K562 (cell line): ENCODE measurements at regions of chr16 and their contacts with region 1.

Region 1: DNA sequence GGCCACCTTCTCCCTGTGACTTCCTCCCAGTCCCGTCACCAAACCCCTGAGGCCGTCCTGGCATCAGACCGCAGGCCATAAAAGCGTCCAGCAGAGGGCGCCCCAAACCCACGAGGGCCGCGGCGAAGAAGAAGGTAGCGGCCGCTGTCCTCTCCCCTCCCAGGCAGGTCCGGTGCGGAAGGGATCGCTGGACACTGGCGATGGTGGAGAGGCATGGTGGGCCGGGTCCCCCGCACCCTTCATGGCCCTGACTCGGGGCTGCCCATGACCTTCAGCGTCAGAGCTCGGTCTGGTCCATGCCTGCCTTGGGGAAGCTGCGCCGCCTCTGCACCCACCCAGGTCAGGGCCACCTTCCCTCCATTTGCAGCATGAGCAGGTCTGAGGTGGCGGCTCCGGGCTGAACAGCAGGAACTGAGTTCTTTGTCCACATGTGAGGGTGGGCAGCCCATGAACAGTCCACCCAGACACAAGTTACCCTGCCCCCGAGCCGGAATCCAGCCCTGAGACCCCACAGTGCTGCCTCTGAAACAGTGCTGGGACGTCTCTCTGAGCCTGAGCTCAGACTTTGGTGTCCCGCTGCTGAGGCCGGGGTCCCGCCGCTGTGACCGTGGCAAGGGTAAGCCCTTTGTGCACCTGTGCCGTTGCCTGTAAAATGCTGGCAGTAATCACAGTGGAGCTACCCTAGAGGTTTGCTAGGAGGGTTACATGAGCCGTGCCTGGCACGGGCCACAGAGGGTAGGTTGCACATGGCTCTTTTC is 40.8 kb upstream of the CMIP start:
- DNase-seq: peak; percentile 93 to 94 (median 94)
- ATAC-seq: peak; percentile 99
- H3K4me3 ChIP-seq: peak overlapping the region; percentile 31
- H3K27ac ChIP-seq: no peak overlapping the region
- H3K4me1 ChIP-seq: peaks cover 6 to 9% of the 10 kb centered on the region in 2 experiments; a peak in 4 of 5 replicates
- H3K27me3 ChIP-seq: peaks cover 3 to 19% of the 10 kb centered on the region in 2 experiments; a peak in 4 of 5 replicates
- CTCF ChIP-seq: peak; percentile 96 to 98 (median 98)
- EP300 ChIP-seq: no peak
- POLR2A ChIP-seq: no peak
- RAD21 ChIP-seq: peak; percentile 99 to 100

Region 2: GRCh38 chr16:80230328-80231120 is 1173.3 kb before region 1 on chr16:
- CTCF ChIA-PET with region 1: no interaction called
- POLR2A ChIA-PET with region 1: no interaction called
- in situ Hi-C with region 1: no loop called
- intact Hi-C with region 1: no loop called
- DNase-seq: no peak
- ATAC-seq: no peak
- H3K4me3 ChIP-seq: no peak overlapping the region
- H3K27ac ChIP-seq: no peak overlapping the region
- H3K4me1 ChIP-seq: no peaks in the 10 kb centered on the region
- H3K27me3 ChIP-seq: no peaks in the 10 kb centered on the region
- CTCF ChIP-seq: no peak
- EP300 ChIP-seq: no peak
- POLR2A ChIP-seq: no peak
- RAD21 ChIP-seq: no peak

Region 3: GRCh38 chr16:81174654-81175571 is 228.9 kb before region 1 on chr16:
- CTCF ChIA-PET with region 1: no interaction called
- POLR2A ChIA-PET with region 1: interaction called, 11 read pairs
- in situ Hi-C with region 1: no loop called
- intact Hi-C with region 1: no loop called
- DNase-seq: no peak
- ATAC-seq: peak; percentile 44
- H3K4me3 ChIP-seq: no peak overlapping the region
- H3K27ac ChIP-seq: no peak overlapping the region
- H3K4me1 ChIP-seq: no peaks in the 10 kb centered on the region
- H3K27me3 ChIP-seq: peaks cover 29 to 90% of the 10 kb centered on the region in 2 experiments
- CTCF ChIP-seq: no peak
- EP300 ChIP-seq: no peak
- POLR2A ChIP-seq: no peak
- RAD21 ChIP-seq: no peak

Region 4: GRCh38 chr16:81293909-81294823 is 109.6 kb before region 1 on chr16:
- CTCF ChIA-PET with region 1: no interaction called
- POLR2A ChIA-PET with region 1: no interaction called
- in situ Hi-C with region 1: no loop called
- intact Hi-C with region 1: no loop called
- DNase-seq: no peak
- ATAC-seq: no peak
- H3K4me3 ChIP-seq: no peak overlapping the region
- H3K27ac ChIP-seq: no peak overlapping the region
- H3K4me1 ChIP-seq: no peaks in the 10 kb centered on the region
- H3K27me3 ChIP-seq: peaks cover 47 to 75% of the 10 kb centered on the region in 2 experiments
- CTCF ChIP-seq: no peak
- EP300 ChIP-seq: no peak
- POLR2A ChIP-seq: no peak
- RAD21 ChIP-seq: no peak

Region 5: GRCh38 chr16:81537721-81538561 is 134.1 kb after region 1 on chr16:
- CTCF ChIA-PET with region 1: interaction called, 4 read pairs
- POLR2A ChIA-PET with region 1: no interaction called
- in situ Hi-C with region 1: no loop called
- intact Hi-C with region 1: loop called (anchors 5 kb)
- DNase-seq: peak in 1 of 4 experiments; percentile 47
- ATAC-seq: peak; percentile 75
- H3K4me3 ChIP-seq: no peak overlapping the region
- H3K27ac ChIP-seq: no peak overlapping the region
- H3K4me1 ChIP-seq: peaks cover 0 to 15% of the 10 kb centered on the region in 2 experiments; a peak in 3 of 5 replicates
- H3K27me3 ChIP-seq: no peaks in the 10 kb centered on the region
- CTCF ChIP-seq: peak; percentile 16 to 49 (median 44); a peak in 3 of 6 replicates
- EP300 ChIP-seq: no peak
- POLR2A ChIP-seq: no peak
- RAD21 ChIP-seq: peak; percentile 26 to 49; a peak in 3 of 4 replicates

Region 6: GRCh38 chr16:81564421-81564911 is 160.7 kb after region 1 on chr16:
- CTCF ChIA-PET with region 1: no interaction called
- POLR2A ChIA-PET with region 1: no interaction called
- in situ Hi-C with region 1: no loop called
- intact Hi-C with region 1: no loop called
- DNase-seq: no peak
- ATAC-seq: no peak
- H3K4me3 ChIP-seq: no peak overlapping the region
- H3K27ac ChIP-seq: no peak overlapping the region
- H3K4me1 ChIP-seq: peaks cover under 1 to 3% of the 10 kb centered on the region in 2 experiments; a peak in 1 of 5 replicates
- H3K27me3 ChIP-seq: no peaks in the 10 kb centered on the region
- CTCF ChIP-seq: no peak
- EP300 ChIP-seq: no peak
- POLR2A ChIP-seq: no peak
- RAD21 ChIP-seq: no peak

Region 7: DNA sequence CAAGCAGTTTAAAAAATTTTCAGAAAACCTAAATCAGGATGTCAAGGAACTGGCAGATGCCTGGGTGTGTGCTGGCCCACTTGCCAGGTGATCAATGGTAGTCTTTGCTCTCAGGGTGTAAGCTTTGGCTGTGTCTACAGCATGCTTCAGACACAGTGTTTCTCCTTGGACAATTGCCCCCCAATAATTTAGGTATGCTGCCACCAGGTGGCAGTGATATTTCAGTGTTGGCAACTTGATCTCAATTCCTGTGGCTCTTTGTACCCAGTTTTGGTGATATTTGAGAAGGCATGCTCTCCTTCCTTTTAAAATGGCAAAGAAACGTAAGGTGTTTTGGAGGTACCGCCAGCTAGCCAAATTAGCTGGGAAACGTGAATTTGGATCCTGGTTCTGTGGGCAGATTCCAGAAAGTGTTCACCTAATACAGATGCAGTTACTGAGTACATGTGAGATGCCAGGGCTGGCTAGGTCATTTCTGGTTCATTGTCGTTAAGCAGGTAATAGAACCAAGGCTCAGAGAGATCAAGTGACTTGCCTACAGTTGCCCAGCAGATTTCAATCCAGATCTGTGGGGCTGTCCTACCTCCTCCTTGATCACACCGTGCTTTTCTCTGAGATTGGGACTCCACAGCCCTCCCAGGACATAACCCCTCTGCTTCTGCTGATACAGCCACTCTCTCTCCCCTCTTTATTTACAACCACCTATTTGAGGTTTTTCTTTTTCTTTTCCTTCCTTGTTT is 219.7 kb after region 1 on chr16:
- CTCF ChIA-PET with region 1: interaction called, 4 read pairs
- POLR2A ChIA-PET with region 1: no interaction called
- in situ Hi-C with region 1: no loop called
- intact Hi-C with region 1: loop called (anchors 1 kb)
- DNase-seq: peak; percentile 51 to 81 (median 61)
- ATAC-seq: peak; percentile 32
- H3K4me3 ChIP-seq: no peak overlapping the region
- H3K27ac ChIP-seq: peak overlapping the region; percentile 3; the same call in 1 of the 3 replicates
- H3K4me1 ChIP-seq: peaks cover 35% of the 10 kb centered on the region in 2 experiments
- H3K27me3 ChIP-seq: no peaks in the 10 kb centered on the region
- CTCF ChIP-seq: peak; percentile 74 to 91 (median 82)
- EP300 ChIP-seq: no peak
- POLR2A ChIP-seq: no peak
- RAD21 ChIP-seq: peak; percentile 92 to 95

Region 8: GRCh38 chr16:81723098-81723723 is 319.4 kb after region 1 on chr16:
- CTCF ChIA-PET with region 1: interaction called, 18 read pairs
- POLR2A ChIA-PET with region 1: interaction called, 3 read pairs
- in situ Hi-C with region 1: loop called (anchors 5 kb)
- intact Hi-C with region 1: loop called (anchors 1 kb)
- DNase-seq: peak; percentile 60 to 87 (median 69)
- ATAC-seq: peak; percentile 92
- H3K4me3 ChIP-seq: no peak overlapping the region
- H3K27ac ChIP-seq: no peak overlapping the region
- H3K4me1 ChIP-seq: peaks cover 4 to 6% of the 10 kb centered on the region in 2 experiments; a peak in 3 of 5 replicates
- H3K27me3 ChIP-seq: peaks cover 8 to 24% of the 10 kb centered on the region in 2 experiments; a peak in 4 of 5 replicates
- CTCF ChIP-seq: peak; percentile 76 to 93 (median 85)
- EP300 ChIP-seq: no peak
- POLR2A ChIP-seq: no peak
- RAD21 ChIP-seq: peak; percentile 91 to 97

Region 9: GRCh38 chr16:81737885-81738786 is 334.3 kb after region 1 on chr16:
- CTCF ChIA-PET with region 1: interaction called, 11 read pairs
- POLR2A ChIA-PET with region 1: no interaction called
- in situ Hi-C with region 1: no loop called
- intact Hi-C with region 1: loop called (anchors 5 kb)
- DNase-seq: peak; percentile 89 to 93 (median 90)
- ATAC-seq: peak; percentile 95
- H3K4me3 ChIP-seq: no peak overlapping the region
- H3K27ac ChIP-seq: no peak overlapping the region
- H3K4me1 ChIP-seq: peaks cover 17 to 18% of the 10 kb centered on the region in 2 experiments
- H3K27me3 ChIP-seq: peaks cover 0 to 4% of the 10 kb centered on the region in 2 experiments; a peak in 1 of 5 replicates
- CTCF ChIP-seq: peak; percentile 94 to 97 (median 96)
- EP300 ChIP-seq: no peak; the same call in 1 of the 2 replicates
- POLR2A ChIP-seq: no peak
- RAD21 ChIP-seq: peak; percentile 95 to 99